PC-9 (cell line): ENCODE measurements at regions of chr2 and their contacts with region 1.

Region 1: DNA sequence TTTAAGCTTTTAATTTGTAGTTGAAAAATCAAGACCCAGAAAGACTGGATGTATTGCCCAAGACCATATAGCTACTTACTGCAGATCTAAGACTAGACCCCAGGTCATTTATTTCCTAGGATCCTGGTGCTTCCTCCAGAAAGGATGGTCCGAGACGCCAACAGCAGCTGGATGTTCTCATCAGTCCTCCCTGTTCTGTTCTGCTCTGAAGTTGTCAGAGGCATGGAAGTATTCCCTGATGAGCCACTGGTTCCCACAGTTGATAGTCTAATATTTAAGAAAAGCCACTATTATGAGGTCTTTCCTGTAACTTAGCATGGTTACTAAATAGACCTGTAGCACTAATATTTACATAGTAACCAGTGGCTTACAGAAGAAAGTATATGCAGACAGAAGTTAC is 393.5 kb downstream of the MTX2 start:
- DNase-seq: no peak
- H3K4me3 ChIP-seq: no peak overlapping the region
- H3K27ac ChIP-seq: no peak overlapping the region
- H3K4me1 ChIP-seq: 0 out of 2 replicates have a peak, but pooled peaks cover 7% of the 10 kb centered on the region
- H3K27me3 ChIP-seq: no peaks in the 10 kb centered on the region
- CTCF ChIP-seq: no peak

Region 2: GRCh38 chr2:175630280-175631244 is 1032.2 kb before region 1 on chr2:
- CTCF ChIA-PET with region 1: no interaction called
- POLR2A ChIA-PET with region 1: no interaction called
- intact Hi-C with region 1: no loop called
- DNase-seq: no peak
- H3K4me3 ChIP-seq: no peak overlapping the region
- H3K27ac ChIP-seq: no peak overlapping the region
- H3K4me1 ChIP-seq: no peaks in the 10 kb centered on the region
- H3K27me3 ChIP-seq: peaks cover 16% of the 10 kb centered on the region
- CTCF ChIP-seq: no peak

Region 3: GRCh38 chr2:175976391-175977157 is 686.2 kb before region 1 on chr2:
- CTCF ChIA-PET with region 1: no interaction called
- POLR2A ChIA-PET with region 1: no interaction called
- intact Hi-C with region 1: no loop called
- DNase-seq: no peak
- H3K4me3 ChIP-seq: no peak overlapping the region
- H3K27ac ChIP-seq: no peak overlapping the region
- H3K4me1 ChIP-seq: no peaks in the 10 kb centered on the region
- H3K27me3 ChIP-seq: no peaks in the 10 kb centered on the region
- CTCF ChIP-seq: no peak

Region 4: DNA sequence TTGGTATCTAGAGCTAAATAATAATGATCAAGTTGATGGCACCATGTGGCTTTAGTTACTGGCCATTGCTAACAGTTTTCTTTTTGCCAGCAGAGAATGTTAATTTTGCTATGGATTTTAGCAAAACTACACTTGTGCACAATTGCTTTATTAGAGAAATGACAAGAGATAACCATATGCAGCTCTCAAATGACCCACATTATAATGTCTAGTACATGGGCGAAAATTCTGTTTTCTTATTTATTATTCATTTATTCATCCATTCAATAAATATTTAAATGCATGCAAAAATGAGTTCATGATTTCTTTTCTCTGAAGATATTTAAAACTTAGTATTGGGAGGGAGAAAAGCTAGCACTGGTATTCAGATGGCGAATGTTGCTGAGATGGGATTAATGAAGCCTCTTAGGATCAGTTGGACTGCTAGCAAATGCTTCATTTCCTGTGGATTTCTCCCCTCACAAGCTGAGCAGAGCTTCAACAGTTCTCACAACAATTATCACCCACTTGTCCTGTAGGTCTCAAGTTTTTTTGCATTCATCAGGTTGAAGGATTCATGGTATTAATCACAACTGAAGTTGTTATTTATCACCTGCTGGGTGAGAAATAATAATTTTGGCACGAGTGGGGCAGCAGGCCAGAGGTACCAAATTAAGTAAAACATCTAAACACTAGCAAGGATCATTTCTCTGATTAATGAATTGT is 298.3 kb before region 1 on chr2:
- CTCF ChIA-PET with region 1: no interaction called
- POLR2A ChIA-PET with region 1: interaction called, 15 read pairs
- intact Hi-C with region 1: no loop called
- DNase-seq: no peak
- H3K4me3 ChIP-seq: no peak overlapping the region
- H3K27ac ChIP-seq: no peak overlapping the region
- H3K4me1 ChIP-seq: no peaks in the 10 kb centered on the region
- H3K27me3 ChIP-seq: no peaks in the 10 kb centered on the region
- CTCF ChIP-seq: no peak

Region 5: GRCh38 chr2:176682278-176682677 is 19.5 kb after region 1 on chr2:
- CTCF ChIA-PET with region 1: no interaction called
- POLR2A ChIA-PET with region 1: no interaction called
- intact Hi-C with region 1: no loop called
- DNase-seq: no peak
- H3K4me3 ChIP-seq: no peak overlapping the region
- H3K27ac ChIP-seq: no peak overlapping the region
- H3K4me1 ChIP-seq: no peaks in the 10 kb centered on the region
- H3K27me3 ChIP-seq: peaks cover 6% of the 10 kb centered on the region; the same call in 1 of the 2 replicates
- CTCF ChIP-seq: no peak

Region 6: DNA sequence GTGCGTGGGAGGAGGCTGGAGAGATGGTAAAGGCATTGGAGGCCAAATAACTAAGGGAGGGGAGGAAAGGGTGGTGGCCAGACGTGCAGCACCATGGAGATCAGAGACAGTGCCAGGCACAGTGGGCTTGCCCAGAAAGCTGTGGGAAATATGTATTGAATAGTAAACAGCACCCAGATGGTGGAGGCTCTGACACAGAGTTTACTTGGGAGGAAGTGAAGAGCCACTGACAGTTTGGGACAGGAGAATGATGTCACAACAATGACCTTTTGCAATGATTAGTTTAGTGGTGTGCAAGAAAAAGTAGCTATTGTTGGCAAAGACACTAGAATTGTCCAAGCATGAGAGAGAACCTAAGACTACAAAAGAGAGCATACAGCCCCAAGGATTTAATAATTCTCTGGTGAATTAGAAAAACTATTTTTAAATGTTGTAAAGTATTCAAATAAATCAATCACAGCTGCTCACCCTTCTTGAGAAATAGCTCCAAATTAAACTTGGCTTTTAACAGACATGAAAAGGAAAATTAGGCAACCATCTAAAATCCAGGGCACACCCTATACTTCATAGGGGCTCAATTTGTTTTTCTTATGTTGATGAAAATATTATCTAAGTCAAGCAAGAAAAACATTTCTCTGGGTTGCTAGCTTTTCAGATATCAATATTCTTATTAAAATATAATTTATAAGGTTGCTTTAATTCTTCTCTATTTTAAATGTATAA is 91.2 kb after region 1 on chr2:
- CTCF ChIA-PET with region 1: no interaction called
- POLR2A ChIA-PET with region 1: no interaction called
- intact Hi-C with region 1: no loop called
- DNase-seq: no peak
- H3K4me3 ChIP-seq: no peak overlapping the region
- H3K27ac ChIP-seq: no peak overlapping the region
- H3K4me1 ChIP-seq: no peaks in the 10 kb centered on the region
- H3K27me3 ChIP-seq: no peaks in the 10 kb centered on the region; the same call in none of the 2 replicates
- CTCF ChIP-seq: no peak